Gastrocnemius medialis (tissue), 4 donors: ENCODE measurements at regions of chr17 and their contacts with region 1.

Region 1: GRCh38 chr17:15456972-15457722 is 10.3 kb downstream of the CDRT4 start:
- DNase-seq: peak; percentile 86 to 95
- ATAC-seq: peak; percentile 81 to 82
- H3K4me3 ChIP-seq: peak overlapping the region in 3 of 4 donors; percentile 10 to 26 (median 10)
- H3K27ac ChIP-seq: peak overlapping the region; percentile 90 to 92 (median 90)
- H3K4me1 ChIP-seq: peaks cover 25 to 35% of the 10 kb centered on the region in 2 donors
- H3K27me3 ChIP-seq: no peaks in the 10 kb centered on the region
- CTCF ChIP-seq: peak; percentile 35 to 54 (median 49)
- POLR2A ChIP-seq: no peak

Region 2: DNA sequence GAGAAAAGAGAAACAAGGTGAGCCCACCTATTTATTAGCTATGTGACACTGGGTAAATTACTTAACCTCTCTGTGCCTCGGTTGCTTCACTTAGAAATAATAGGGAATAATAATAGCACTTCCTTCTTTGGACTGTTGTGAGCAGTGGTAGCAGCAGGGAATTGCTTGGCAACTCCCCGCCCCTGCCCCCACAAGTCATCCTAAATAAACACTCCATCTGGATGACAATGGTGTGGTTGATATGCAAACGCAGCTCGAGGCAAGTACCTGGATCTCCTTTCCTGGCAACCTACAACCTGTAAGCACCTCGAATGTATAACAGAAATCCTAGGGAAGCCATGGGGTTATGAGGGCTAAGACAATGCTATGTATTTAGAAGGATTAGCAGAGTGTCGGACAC is 124.8 kb before region 1 on chr17:
- in situ Hi-C with region 1: no loop called
- intact Hi-C with region 1: no loop called
- DNase-seq: no peak
- ATAC-seq: no peak
- H3K4me3 ChIP-seq: no peak overlapping the region
- H3K27ac ChIP-seq: no peak overlapping the region
- H3K4me1 ChIP-seq: no peaks in the 10 kb centered on the region
- H3K27me3 ChIP-seq: no peaks in the 10 kb centered on the region
- CTCF ChIP-seq: no peak
- POLR2A ChIP-seq: no peak

Region 3: GRCh38 chr17:15384142-15384787 is 72.9 kb before region 1 on chr17:
- in situ Hi-C with region 1: no loop called
- intact Hi-C with region 1: loop called (anchors 2 kb)
- DNase-seq: peak; percentile 62 to 79
- ATAC-seq: peak; percentile 81 to 87
- H3K4me3 ChIP-seq: peak overlapping the region; percentile 27 to 49 (median 44)
- H3K27ac ChIP-seq: peak overlapping the region; percentile 57 to 70 (median 60)
- H3K4me1 ChIP-seq: peaks cover 0 to 10% of the 10 kb centered on the region in 2 donors
- H3K27me3 ChIP-seq: no peaks in the 10 kb centered on the region
- CTCF ChIP-seq: no peak
- POLR2A ChIP-seq: no peak

Region 4: GRCh38 chr17:15432807-15433600 is 24.1 kb before region 1 on chr17:
- in situ Hi-C with region 1: no loop called
- intact Hi-C with region 1: loop called (anchors 1 kb)
- DNase-seq: peak in 1 of 2 donors; percentile 37
- ATAC-seq: no peak
- H3K4me3 ChIP-seq: no peak overlapping the region
- H3K27ac ChIP-seq: peak overlapping the region; percentile 86 to 94 (median 89)
- H3K4me1 ChIP-seq: peaks cover 62 to 67% of the 10 kb centered on the region in 2 donors
- H3K27me3 ChIP-seq: no peaks in the 10 kb centered on the region
- CTCF ChIP-seq: no peak
- POLR2A ChIP-seq: no peak